ENCODE measurements at regions of chr4 and their contacts with region 1.

Region 1: GRCh38 chr4:6917461-6918271 is 8.0 kb downstream of the TBC1D14 start:
- DNase-seq: peak; percentile 85 to 92
- H3K4me3 ChIP-seq: peak overlapping the region; percentile 11; the same call in 1 of the 2 replicates
- H3K27ac ChIP-seq: peak overlapping the region; percentile 86
- H3K4me1 ChIP-seq: peaks cover 39% of the 10 kb centered on the region
- H3K27me3 ChIP-seq: no peaks in the 10 kb centered on the region
- CTCF ChIP-seq: peak; percentile 63

Region 2: DNA sequence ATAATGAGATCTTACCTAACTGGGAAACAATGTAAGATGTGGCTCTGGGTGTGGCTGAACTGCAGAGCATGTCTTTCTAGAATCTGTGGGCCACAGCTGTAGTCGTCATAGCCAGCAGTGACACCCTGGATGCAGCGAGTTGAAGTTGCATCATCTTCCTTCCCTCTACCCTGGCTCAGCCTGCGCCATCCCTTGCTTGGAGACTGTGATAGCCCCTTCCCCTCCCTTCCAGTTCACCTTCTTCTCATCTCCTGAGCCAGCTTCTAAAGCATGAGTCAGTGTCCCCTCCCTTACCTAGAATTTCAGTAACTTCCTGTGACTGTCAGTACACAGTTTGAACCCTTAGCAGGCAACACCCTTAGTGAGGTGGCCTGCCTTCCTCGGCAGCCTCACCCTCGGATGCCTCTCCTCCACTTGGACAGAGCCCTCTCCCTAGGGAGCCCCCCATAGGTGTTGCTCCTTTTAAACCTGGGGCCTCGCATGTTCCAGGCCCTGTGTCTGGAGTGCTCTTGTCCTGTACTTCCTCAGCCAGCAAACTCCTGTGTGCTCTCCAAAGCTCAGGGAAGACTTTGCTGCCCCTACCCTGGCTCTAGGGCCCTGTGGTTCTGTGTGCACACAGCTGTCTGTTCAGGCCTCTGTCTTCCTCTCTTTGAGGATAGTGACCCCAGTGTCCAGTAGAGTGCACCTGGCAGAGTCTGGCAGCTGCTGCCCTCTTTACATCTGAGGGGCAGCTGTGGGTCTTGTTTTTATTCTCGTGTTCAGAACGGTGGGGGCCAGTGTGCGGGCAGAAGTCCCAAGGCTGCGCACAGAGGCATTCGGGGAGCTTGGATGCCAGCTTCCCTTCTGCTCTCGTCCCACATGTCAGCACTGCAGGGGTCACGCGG is 81.7 kb after region 1 on chr4:
- CTCF ChIA-PET with region 1: interaction called, 11 read pairs
- POLR2A ChIA-PET with region 1: no interaction called
- intact Hi-C with region 1: loop called (anchors 1 kb)
- DNase-seq: peak; percentile 79 to 93
- H3K4me3 ChIP-seq: no peak overlapping the region
- H3K27ac ChIP-seq: peak overlapping the region; percentile 86
- H3K4me1 ChIP-seq: peaks cover 26% of the 10 kb centered on the region
- H3K27me3 ChIP-seq: no peaks in the 10 kb centered on the region
- CTCF ChIP-seq: no peak